Activated CD8-positive, alpha-beta memory T cell treated with anti-CD3 and anti-CD28 coated beads, Interleukin-2, amount 10 ng/mL, durations not matched to agents 7 days and 5 days (primary cell): ENCODE measurements at regions of chr2 and their contacts with region 1.

Region 1: GRCh38 chr2:25131567-25132298 is 36.6 kb downstream of the POMC start:
- DNase-seq: no peak
- ATAC-seq: peak; percentile 23
- H3K4me3 Mint-ChIP-seq: no peak overlapping the region
- H3K27ac Mint-ChIP-seq: no peak overlapping the region
- H3K4me1 Mint-ChIP-seq: peaks cover 6% of the 10 kb centered on the region
- H3K27me3 Mint-ChIP-seq: peaks cover 67% of the 10 kb centered on the region

Region 2: GRCh38 chr2:24409700-24410556 is 721.8 kb before region 1 on chr2:
- CTCF ChIA-PET with region 1: interaction called, 26 read pairs
- DNase-seq: peak; percentile 52
- ATAC-seq: peak; percentile 70
- H3K4me3 Mint-ChIP-seq: no peak overlapping the region
- H3K27ac Mint-ChIP-seq: no peak overlapping the region
- H3K4me1 Mint-ChIP-seq: peaks cover 3% of the 10 kb centered on the region
- H3K27me3 Mint-ChIP-seq: peaks cover 4% of the 10 kb centered on the region

Region 3: DNA sequence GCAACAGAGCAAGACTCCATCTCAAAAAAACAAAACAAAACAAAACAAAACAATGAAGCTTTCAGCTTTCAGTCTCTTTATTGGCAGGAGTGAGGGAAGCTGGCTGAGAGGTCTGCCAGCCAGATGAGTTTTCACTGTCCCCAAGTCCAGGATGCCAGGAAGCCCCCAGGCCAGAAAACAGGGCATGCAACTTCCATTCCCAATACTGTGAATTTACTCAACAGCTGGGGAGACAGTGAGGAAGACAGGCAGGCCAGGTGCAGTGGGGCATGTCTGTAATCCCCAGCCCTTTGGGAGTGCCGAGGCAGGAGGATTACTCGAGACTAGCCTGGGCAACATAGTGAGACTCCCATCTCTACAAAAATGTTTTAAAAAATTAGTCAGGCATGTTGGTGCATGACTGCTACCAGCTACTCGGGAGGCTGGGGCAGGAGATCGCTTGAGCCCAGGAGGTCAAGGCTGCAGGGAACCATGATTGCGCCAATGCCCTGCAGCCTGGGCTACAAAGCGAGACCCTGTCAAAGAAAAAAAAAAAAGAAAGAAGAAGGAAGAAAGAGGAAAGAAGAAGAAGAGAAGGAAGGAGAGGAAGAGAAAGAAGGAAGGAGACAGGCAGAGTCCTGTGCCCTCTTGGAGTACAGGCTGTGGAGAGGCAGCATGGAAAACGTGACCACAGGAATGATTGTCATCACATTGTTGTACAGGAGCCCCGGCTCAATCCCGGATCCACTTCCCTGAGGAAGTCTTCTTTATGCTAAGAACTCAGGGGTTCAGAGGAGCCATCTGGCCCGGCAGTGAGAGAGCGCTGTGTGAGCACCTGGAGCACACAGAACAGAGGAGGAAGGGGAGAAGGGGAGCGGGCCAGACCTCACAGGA is 65.8 kb after region 1 on chr2:
- CTCF ChIA-PET with region 1: interaction called, 13 read pairs
- DNase-seq: no peak
- ATAC-seq: no peak
- H3K4me3 Mint-ChIP-seq: no peak overlapping the region
- H3K27ac Mint-ChIP-seq: no peak overlapping the region
- H3K4me1 Mint-ChIP-seq: peaks cover 4% of the 10 kb centered on the region
- H3K27me3 Mint-ChIP-seq: peaks cover 4% of the 10 kb centered on the region

Region 4: GRCh38 chr2:25252281-25253105 is 120.8 kb after region 1 on chr2:
- CTCF ChIA-PET with region 1: no interaction called
- DNase-seq: peak; percentile 72
- ATAC-seq: peak; percentile 83
- H3K4me3 Mint-ChIP-seq: peak overlapping the region; percentile 75
- H3K27ac Mint-ChIP-seq: peak overlapping the region; percentile 55
- H3K4me1 Mint-ChIP-seq: peaks cover 31% of the 10 kb centered on the region
- H3K27me3 Mint-ChIP-seq: no peaks in the 10 kb centered on the region